H1 (cell line): ENCODE measurements at regions of chr10 and their contacts with region 1.

Region 1: DNA sequence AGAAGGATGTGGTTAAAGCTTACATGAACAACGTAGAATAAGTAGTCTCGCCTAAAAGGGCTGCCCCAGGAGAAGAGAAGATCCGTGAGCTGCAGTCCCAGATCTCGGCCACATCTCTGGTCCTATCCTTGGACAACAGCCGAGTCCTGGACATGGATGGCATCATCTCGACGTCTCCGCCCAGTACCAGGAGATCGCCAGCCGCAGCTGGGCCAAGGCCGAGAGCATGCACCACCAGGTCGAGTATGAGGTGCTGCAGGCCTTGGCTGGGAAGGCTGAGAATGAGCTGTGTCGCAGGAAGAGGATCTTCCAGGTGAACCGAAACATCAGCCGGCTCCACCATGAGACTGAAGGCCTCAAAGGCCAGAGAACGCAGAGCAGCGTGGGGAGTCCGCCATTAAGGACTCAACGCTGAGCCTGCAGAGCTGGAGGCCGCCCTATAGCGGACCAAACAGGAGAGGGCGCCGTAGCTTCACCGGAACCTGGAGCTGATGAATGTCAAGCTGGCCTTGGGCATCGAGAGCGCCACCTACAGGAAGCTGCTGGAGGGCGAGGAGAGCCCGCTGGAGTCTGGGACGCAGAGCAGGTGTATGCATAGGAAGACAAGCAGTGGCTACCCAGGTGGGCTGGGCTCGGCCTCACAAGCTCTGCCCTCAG is 22.2 kb downstream of the LIPK start:
- DNase-seq: peak; percentile 93 to 99
- H3K4me3 ChIP-seq: no peak overlapping the region
- H3K27ac ChIP-seq: no peak overlapping the region
- H3K4me1 ChIP-seq: peaks cover 0 to 6% (median 2%) of the 10 kb centered on the region in 4 experiments; a peak in 3 of 7 replicates
- H3K27me3 ChIP-seq: peaks cover 0 to 3% (median 0%) of the 10 kb centered on the region in 4 experiments; a peak in 2 of 7 replicates
- CTCF ChIP-seq: peak; percentile 99 to 100 (median 100)
- EP300 ChIP-seq: peak in 1 of 2 experiments; percentile 53; a peak in 1 of 3 replicates
- POLR2A ChIP-seq: no peak
- RAD21 ChIP-seq: peak; percentile 95

Region 2: GRCh38 chr10:88651101-88651551 is 77.1 kb before region 1 on chr10:
- CTCF ChIA-PET with region 1: no interaction called
- POLR2A ChIA-PET with region 1: no interaction called
- DNase-seq: no peak
- H3K4me3 ChIP-seq: no peak overlapping the region
- H3K27ac ChIP-seq: no peak overlapping the region
- H3K4me1 ChIP-seq: no peaks in the 10 kb centered on the region
- H3K27me3 ChIP-seq: no peaks in the 10 kb centered on the region
- CTCF ChIP-seq: no peak
- EP300 ChIP-seq: no peak
- POLR2A ChIP-seq: no peak
- RAD21 ChIP-seq: no peak

Region 3: DNA sequence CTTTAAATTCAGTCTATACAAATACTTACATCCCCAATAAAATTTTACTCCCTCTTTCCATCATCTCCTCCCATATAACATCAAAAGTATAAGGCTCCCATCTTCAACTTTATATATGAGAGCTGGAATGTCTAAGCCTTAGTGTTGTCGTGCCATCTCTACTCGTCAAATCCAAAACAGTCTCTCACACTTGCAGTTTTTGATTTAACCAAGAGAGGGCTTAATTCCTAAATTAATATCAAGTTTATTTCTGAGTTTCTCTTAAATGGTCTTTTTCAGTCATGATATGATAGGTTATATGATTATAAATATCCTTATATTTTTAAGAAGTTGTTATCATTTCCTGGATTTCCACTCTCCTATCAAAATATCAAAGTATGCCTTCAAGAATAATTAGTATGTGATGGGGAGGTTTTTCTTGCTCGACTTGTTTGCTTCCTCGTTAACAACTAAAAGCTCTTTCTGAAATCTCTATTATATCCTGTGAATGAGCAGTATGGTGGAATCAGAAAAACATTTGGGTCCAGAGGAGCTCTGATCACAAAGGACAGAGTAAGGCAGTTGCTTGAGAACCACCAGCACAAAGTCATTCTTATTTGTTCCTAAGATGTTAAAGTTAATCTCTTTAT is 34.7 kb before region 1 on chr10:
- CTCF ChIA-PET with region 1: interaction called, 63 read pairs
- POLR2A ChIA-PET with region 1: no interaction called
- DNase-seq: no peak
- H3K4me3 ChIP-seq: no peak overlapping the region
- H3K27ac ChIP-seq: no peak overlapping the region
- H3K4me1 ChIP-seq: no peaks in the 10 kb centered on the region
- H3K27me3 ChIP-seq: peaks cover 9 to 27% (median 24%) of the 10 kb centered on the region in 4 experiments
- CTCF ChIP-seq: peak in 1 of 3 experiments; percentile 5; a peak in 1 of 4 replicates
- EP300 ChIP-seq: no peak
- POLR2A ChIP-seq: no peak
- RAD21 ChIP-seq: no peak

Region 4: GRCh38 chr10:88744002-88744401 is 15.8 kb after region 1 on chr10:
- CTCF ChIA-PET with region 1: interaction called, 95 read pairs
- POLR2A ChIA-PET with region 1: no interaction called
- DNase-seq: peak in 1 of 2 experiments; percentile 7
- H3K4me3 ChIP-seq: no peak overlapping the region
- H3K27ac ChIP-seq: no peak overlapping the region
- H3K4me1 ChIP-seq: no peaks in the 10 kb centered on the region
- H3K27me3 ChIP-seq: no peaks in the 10 kb centered on the region
- CTCF ChIP-seq: peak; percentile 39 to 51 (median 46)
- EP300 ChIP-seq: no peak
- POLR2A ChIP-seq: no peak
- RAD21 ChIP-seq: peak; percentile 44 to 52

Region 5: DNA sequence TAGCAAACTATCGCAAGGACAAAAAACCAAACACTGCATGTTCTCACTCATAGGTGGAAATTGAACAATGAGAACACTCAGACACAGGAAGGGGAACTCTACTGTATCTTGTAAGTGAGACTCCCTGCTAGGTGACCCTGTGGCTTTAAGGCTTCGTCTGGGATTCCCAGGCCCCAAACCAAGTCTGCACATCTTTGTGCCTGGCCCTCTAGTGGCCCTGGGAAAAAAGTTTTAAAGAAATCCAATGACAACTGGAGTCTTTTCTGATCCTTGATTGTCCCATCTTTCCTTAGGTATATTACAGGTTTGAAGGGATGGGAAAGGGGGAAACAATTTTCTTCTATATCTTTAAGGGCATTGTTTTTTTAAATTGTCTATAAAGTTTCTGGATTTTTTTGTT is 63.7 kb after region 1 on chr10:
- CTCF ChIA-PET with region 1: interaction called, 28 read pairs
- POLR2A ChIA-PET with region 1: interaction called, 3 read pairs
- DNase-seq: no peak
- H3K4me3 ChIP-seq: no peak overlapping the region
- H3K27ac ChIP-seq: no peak overlapping the region
- H3K4me1 ChIP-seq: no peaks in the 10 kb centered on the region
- H3K27me3 ChIP-seq: no peaks in the 10 kb centered on the region
- CTCF ChIP-seq: peak; percentile 44 to 78 (median 65)
- EP300 ChIP-seq: no peak
- POLR2A ChIP-seq: no peak
- RAD21 ChIP-seq: peak; percentile 58 to 60

Region 6: DNA sequence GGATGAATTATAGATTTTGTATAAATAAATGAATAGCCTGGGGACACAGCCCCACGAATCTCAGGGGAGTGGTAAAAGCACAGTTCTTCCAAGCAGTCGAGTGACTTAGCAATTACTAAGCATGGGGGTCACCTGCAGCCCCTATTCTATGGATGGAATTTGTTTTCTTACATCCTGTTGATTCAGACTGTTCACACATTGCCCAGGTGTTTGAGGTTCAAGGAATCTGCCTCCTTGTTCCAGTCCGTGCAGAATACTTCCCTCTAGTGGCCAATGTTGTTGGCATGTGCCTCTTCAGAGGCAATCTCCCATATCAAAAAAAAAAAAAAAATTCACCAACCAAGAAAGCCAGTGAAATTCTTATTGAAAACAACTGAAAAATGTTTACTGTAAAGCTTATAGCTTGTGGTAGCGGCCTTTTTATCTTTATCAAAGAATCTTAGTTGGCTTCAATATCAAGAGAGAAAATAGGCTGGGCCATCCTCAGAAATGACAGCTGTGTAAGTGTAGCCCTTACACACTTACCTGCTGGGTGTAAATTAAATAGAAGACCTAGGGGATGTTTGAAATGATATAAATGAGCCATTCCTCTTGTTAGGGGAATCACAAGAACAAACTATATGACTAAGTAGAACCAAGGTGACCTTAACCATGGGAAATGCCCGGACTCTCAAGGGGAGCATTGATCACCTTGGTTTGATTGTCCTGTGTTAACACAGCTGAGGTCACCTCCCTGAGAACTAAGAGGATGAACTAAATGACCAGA is 82.1 kb after region 1 on chr10:
- CTCF ChIA-PET with region 1: interaction called, 57 read pairs
- POLR2A ChIA-PET with region 1: no interaction called
- DNase-seq: no peak
- H3K4me3 ChIP-seq: no peak overlapping the region
- H3K27ac ChIP-seq: no peak overlapping the region
- H3K4me1 ChIP-seq: no peaks in the 10 kb centered on the region
- H3K27me3 ChIP-seq: no peaks in the 10 kb centered on the region
- CTCF ChIP-seq: peak; percentile 31 to 73 (median 71)
- EP300 ChIP-seq: no peak
- POLR2A ChIP-seq: no peak
- RAD21 ChIP-seq: peak; percentile 66 to 69

Region 7: DNA sequence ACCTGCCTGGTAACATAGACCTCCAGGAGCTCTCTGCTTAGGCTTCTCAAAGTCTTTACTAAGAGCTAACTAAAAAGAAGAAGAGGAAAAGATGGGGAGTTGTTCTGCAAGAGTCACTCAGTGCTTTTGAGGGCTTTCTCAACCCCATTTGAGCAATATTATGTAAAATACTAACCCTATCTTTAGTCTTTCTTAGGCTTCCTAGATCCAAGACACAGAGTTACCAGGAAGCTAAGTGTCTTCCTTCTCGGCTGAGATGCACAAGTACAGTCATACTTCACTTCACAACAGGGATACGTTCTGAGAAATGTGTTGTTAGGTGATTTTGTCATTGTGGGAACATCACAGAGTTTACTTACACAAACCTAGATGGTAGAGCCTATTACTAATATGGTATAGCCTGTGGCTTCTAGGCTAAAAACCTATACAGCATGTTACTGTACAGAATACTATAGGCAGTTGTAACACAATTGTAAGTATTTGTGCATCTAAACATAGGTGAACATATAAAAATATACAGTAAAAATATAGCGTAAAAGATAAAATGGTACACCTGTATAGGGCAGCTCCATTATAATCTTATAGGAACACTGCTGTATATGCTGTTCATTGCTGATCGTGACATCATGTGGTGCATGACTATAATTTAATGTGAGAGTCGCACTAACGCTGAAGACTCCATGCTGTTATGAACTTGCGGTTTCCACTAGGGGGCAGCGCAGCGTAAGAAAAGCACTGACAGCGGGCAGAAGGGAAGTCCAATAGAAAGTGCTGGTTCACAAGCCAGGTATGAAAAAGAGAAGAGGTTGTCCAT is 107.1 kb after region 1 on chr10:
- CTCF ChIA-PET with region 1: interaction called, 23 read pairs
- POLR2A ChIA-PET with region 1: no interaction called
- DNase-seq: peak in 1 of 2 experiments; percentile 80
- H3K4me3 ChIP-seq: no peak overlapping the region
- H3K27ac ChIP-seq: no peak overlapping the region
- H3K4me1 ChIP-seq: no peaks in the 10 kb centered on the region
- H3K27me3 ChIP-seq: no peaks in the 10 kb centered on the region
- CTCF ChIP-seq: peak; percentile 69 to 95 (median 87)
- EP300 ChIP-seq: no peak
- POLR2A ChIP-seq: no peak
- RAD21 ChIP-seq: peak; percentile 97 to 98